GM12878 (cell line): ENCODE measurements at regions of chr1 and their contacts with region 1.

Region 1: GRCh38 chr1:167273027-167273800 is 52.5 kb downstream of the POU2F1 start:
- DNase-seq: no peak
- ATAC-seq: no peak; the same call in 2 of the 3 replicates
- H3K4me3 ChIP-seq: no peak overlapping the region
- H3K27ac ChIP-seq: no peak overlapping the region
- H3K4me1 ChIP-seq: peaks cover 23% of the 10 kb centered on the region; the same call in 1 of the 2 replicates
- H3K27me3 ChIP-seq: no peaks in the 10 kb centered on the region
- CTCF ChIP-seq: no peak
- EP300 ChIP-seq: no peak
- POLR2A ChIP-seq: no peak
- RAD21 ChIP-seq: no peak

Region 2: GRCh38 chr1:167291539-167292185 is 18.4 kb after region 1 on chr1:
- CTCF ChIA-PET with region 1: interaction called, 8 read pairs
- POLR2A ChIA-PET with region 1: interaction called, 10 read pairs
- RAD21 ChIA-PET with region 1: interaction called, 8 read pairs
- SMC1A ChIA-PET with region 1: interaction called, 8 read pairs
- in situ Hi-C with region 1: no loop called
- intact Hi-C with region 1: no loop called
- DNase-seq: no peak
- ATAC-seq: no peak
- H3K4me3 ChIP-seq: no peak overlapping the region
- H3K27ac ChIP-seq: no peak overlapping the region
- H3K4me1 ChIP-seq: no peaks in the 10 kb centered on the region
- H3K27me3 ChIP-seq: no peaks in the 10 kb centered on the region
- CTCF ChIP-seq: no peak
- EP300 ChIP-seq: no peak
- POLR2A ChIP-seq: no peak
- RAD21 ChIP-seq: no peak

Region 3: DNA sequence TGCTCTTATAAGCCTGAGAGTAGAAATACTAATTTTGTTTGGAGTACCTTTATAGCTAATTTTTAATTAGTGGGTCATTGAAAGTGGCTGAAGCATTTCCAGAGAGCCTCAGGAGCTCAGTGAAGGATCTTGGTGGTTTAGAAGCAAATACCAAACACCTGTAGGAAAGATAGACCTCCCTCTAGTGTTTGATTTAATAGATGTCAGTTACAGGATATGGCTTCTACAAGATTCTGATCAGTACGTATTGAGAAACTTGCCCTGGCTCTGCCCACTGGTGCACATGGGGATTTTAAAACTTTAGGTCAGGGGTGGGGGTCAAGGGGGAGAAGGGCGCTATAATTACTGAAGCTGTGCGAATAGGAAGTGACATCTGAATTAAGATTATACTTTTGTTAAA is 69.6 kb after region 1 on chr1:
- CTCF ChIA-PET with region 1: interaction called, 245 read pairs
- POLR2A ChIA-PET with region 1: interaction called, 4 read pairs
- RAD21 ChIA-PET with region 1: interaction called, 89 read pairs
- SMC1A ChIA-PET with region 1: interaction called, 145 read pairs
- in situ Hi-C with region 1: loop called (anchors 5 kb)
- intact Hi-C with region 1: loop called (anchors 2 kb)
- DNase-seq: no peak
- ATAC-seq: peak; percentile 93
- H3K4me3 ChIP-seq: no peak overlapping the region
- H3K27ac ChIP-seq: no peak overlapping the region
- H3K4me1 ChIP-seq: no peaks in the 10 kb centered on the region
- H3K27me3 ChIP-seq: no peaks in the 10 kb centered on the region
- CTCF ChIP-seq: peak; percentile 39 to 59 (median 45); a peak in 5 of 6 replicates
- EP300 ChIP-seq: no peak
- POLR2A ChIP-seq: no peak
- RAD21 ChIP-seq: peak; percentile 68

Region 4: GRCh38 chr1:167401260-167401873 is 128.2 kb after region 1 on chr1:
- CTCF ChIA-PET with region 1: interaction called, 22 read pairs
- POLR2A ChIA-PET with region 1: no interaction called
- RAD21 ChIA-PET with region 1: interaction called, 14 read pairs
- SMC1A ChIA-PET with region 1: interaction called, 30 read pairs
- in situ Hi-C with region 1: loop called (anchors 5 kb)
- intact Hi-C with region 1: loop called (anchors 5 kb)
- DNase-seq: peak; percentile 11
- ATAC-seq: peak; percentile 93
- H3K4me3 ChIP-seq: no peak overlapping the region
- H3K27ac ChIP-seq: no peak overlapping the region
- H3K4me1 ChIP-seq: no peaks in the 10 kb centered on the region
- H3K27me3 ChIP-seq: no peaks in the 10 kb centered on the region
- CTCF ChIP-seq: peak; percentile 45 to 76 (median 52); a peak in 5 of 6 replicates
- EP300 ChIP-seq: no peak
- POLR2A ChIP-seq: no peak
- RAD21 ChIP-seq: peak; percentile 73

Region 5: GRCh38 chr1:167573026-167573425 is 299.8 kb after region 1 on chr1:
- CTCF ChIA-PET with region 1: no interaction called
- POLR2A ChIA-PET with region 1: no interaction called
- RAD21 ChIA-PET with region 1: no interaction called
- SMC1A ChIA-PET with region 1: no interaction called
- in situ Hi-C with region 1: no loop called
- intact Hi-C with region 1: no loop called
- DNase-seq: no peak
- ATAC-seq: no peak
- H3K4me3 ChIP-seq: no peak overlapping the region
- H3K27ac ChIP-seq: no peak overlapping the region
- H3K4me1 ChIP-seq: no peaks in the 10 kb centered on the region
- H3K27me3 ChIP-seq: no peaks in the 10 kb centered on the region
- CTCF ChIP-seq: no peak
- EP300 ChIP-seq: no peak
- POLR2A ChIP-seq: no peak
- RAD21 ChIP-seq: no peak